ENCODE measurements at regions of chr12 and their contacts with region 1.

Region 1: GRCh38 chr12:51341259-51342007 is 5.0 kb downstream of the CELA1 start:
- DNase-seq: peak; percentile 83
- ATAC-seq: peak; percentile 91
- H3K4me3 Mint-ChIP-seq: no peak overlapping the region
- H3K27ac Mint-ChIP-seq: peak overlapping the region; percentile 48
- H3K4me1 Mint-ChIP-seq: peaks cover 7% of the 10 kb centered on the region
- H3K27me3 Mint-ChIP-seq: no peaks in the 10 kb centered on the region

Region 2: GRCh38 chr12:50763639-50764285 is 577.7 kb before region 1 on chr12 and contains the start of gene ATF1:
- CTCF ChIA-PET with region 1: interaction called, 10 read pairs
- DNase-seq: peak; percentile 93
- ATAC-seq: peak; percentile 84
- H3K4me3 Mint-ChIP-seq: peak within 1 kb of the TSS; percentile 85
- H3K27ac Mint-ChIP-seq: peak within 1 kb of the TSS; percentile 95
- H3K4me1 Mint-ChIP-seq: peaks cover 32% of the 10 kb centered on the region
- H3K27me3 Mint-ChIP-seq: no peaks in the 10 kb centered on the region
- total RNA-seq, gene ATF1: 29.4 to 44.0 TPM

Region 3: GRCh38 chr12:51246254-51246853 is 95.1 kb before region 1 on chr12:
- CTCF ChIA-PET with region 1: interaction called, 10 read pairs
- DNase-seq: peak; percentile 60
- ATAC-seq: peak; percentile 72
- H3K4me3 Mint-ChIP-seq: peak overlapping the region; percentile 11
- H3K27ac Mint-ChIP-seq: peak overlapping the region; percentile 85
- H3K4me1 Mint-ChIP-seq: peaks cover 42% of the 10 kb centered on the region
- H3K27me3 Mint-ChIP-seq: no peaks in the 10 kb centered on the region

Region 4: DNA sequence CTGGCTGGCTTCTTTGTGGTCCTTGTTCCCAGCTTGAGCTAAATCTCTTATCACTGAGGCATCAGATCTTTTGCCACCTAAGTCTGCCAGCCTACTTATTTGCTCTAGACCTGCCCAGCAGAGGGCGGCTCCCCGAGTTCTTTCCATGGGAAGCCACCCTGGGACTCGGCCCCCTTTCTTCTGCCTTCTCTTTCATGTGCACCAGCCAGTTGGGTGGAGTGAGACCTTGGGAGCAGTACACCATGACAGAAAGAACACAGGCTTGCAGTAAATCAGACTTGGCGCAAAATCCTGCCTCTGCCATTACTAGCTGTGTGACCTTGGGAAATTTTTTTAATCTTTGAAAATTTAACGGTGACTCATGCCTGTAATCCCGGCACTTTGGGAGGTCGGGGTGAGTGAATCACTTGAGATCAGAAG is 78.7 kb before region 1 on chr12:
- CTCF ChIA-PET with region 1: interaction called, 34 read pairs
- DNase-seq: peak; percentile 51
- ATAC-seq: peak; percentile 31
- H3K4me3 Mint-ChIP-seq: no peak overlapping the region
- H3K27ac Mint-ChIP-seq: no peak overlapping the region
- H3K4me1 Mint-ChIP-seq: peaks cover 14% of the 10 kb centered on the region
- H3K27me3 Mint-ChIP-seq: no peaks in the 10 kb centered on the region

Region 5: DNA sequence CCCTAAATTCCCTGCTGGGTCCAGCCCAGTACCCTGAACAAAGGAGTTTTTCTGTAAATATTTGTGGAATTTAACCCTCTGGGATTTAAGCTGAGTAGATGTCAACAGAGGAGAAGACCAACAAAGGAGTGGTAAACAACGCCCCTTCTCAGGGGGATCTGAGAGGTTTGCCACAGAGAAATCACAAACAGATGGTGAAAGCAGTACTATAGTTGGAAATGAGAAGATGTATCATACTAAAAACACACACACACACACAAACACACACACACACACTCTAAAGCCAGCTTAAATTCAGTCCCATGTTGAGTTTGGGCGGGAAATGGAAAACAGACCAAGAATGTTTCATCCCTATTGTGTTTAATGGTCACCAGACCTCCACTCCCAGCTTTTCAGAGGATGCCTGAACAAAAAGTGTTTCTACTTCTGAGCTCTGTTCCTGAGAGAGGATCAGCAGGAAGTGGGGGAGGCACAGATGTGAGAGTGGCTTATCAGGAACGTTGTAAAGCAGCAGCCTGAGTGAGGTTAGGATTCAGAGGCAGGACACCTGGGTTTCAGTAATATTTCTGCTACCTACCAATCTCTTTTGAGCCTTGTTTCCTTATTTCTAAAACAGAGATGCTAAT is 20.6 kb before region 1 on chr12:
- CTCF ChIA-PET with region 1: interaction called, 44 read pairs
- DNase-seq: no peak
- ATAC-seq: no peak
- H3K4me3 Mint-ChIP-seq: peak overlapping the region; percentile 95
- H3K27ac Mint-ChIP-seq: peak overlapping the region; percentile 91
- H3K4me1 Mint-ChIP-seq: peaks cover 67% of the 10 kb centered on the region
- H3K27me3 Mint-ChIP-seq: no peaks in the 10 kb centered on the region

Region 6: GRCh38 chr12:51351913-51352532 is 10.6 kb after region 1 on chr12:
- CTCF ChIA-PET with region 1: interaction called, 39 read pairs
- DNase-seq: peak; percentile 52
- ATAC-seq: peak; percentile 47
- H3K4me3 Mint-ChIP-seq: no peak overlapping the region
- H3K27ac Mint-ChIP-seq: no peak overlapping the region
- H3K4me1 Mint-ChIP-seq: no peaks in the 10 kb centered on the region
- H3K27me3 Mint-ChIP-seq: no peaks in the 10 kb centered on the region

Region 7: GRCh38 chr12:51405801-51406207 is 64.4 kb after region 1 on chr12:
- CTCF ChIA-PET with region 1: no interaction called
- DNase-seq: no peak
- ATAC-seq: no peak
- H3K4me3 Mint-ChIP-seq: no peak overlapping the region
- H3K27ac Mint-ChIP-seq: no peak overlapping the region
- H3K4me1 Mint-ChIP-seq: peaks cover 7% of the 10 kb centered on the region
- H3K27me3 Mint-ChIP-seq: no peaks in the 10 kb centered on the region

Region 8: DNA sequence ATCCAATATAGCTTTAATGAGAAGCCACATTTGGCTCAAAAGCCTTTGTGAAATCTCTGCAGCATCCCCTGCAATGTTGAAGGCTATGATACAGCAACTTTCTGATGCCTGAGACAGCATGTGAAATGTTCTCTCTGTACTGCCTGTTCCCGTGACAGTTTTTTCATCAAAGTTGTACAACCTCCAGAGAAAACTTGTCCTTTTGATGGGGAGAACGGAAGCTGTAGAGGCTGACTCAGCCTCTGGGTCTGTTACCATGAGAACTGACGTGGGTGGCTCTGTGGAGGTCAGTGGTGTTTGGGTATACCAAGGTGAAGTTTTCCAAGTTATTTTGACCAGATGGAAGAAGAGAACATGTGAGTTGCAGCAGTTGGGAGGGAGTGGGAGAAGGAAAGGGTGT is 100.2 kb after region 1 on chr12:
- CTCF ChIA-PET with region 1: no interaction called
- DNase-seq: no peak
- ATAC-seq: no peak
- H3K4me3 Mint-ChIP-seq: no peak overlapping the region
- H3K27ac Mint-ChIP-seq: no peak overlapping the region
- H3K4me1 Mint-ChIP-seq: peaks cover 20% of the 10 kb centered on the region
- H3K27me3 Mint-ChIP-seq: no peaks in the 10 kb centered on the region

Region 9: DNA sequence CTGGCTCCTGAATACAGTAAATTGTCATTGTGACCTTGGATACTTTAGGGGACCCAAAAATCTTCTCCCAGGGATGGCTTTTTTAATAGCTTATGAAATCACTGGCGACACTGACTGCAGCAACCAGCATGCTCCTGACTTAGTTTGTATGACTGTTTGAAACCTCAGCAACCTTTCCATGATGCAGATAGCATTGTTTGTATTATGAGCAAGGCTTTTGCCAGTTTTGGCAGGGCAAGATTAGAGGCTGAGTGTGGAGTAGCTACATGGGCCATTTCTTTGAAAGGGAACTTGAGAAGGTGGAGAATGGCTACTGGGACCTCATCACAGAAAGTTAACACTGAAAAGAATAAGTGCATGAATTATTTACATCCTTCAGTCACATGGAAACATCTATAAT is 134.1 kb after region 1 on chr12:
- CTCF ChIA-PET with region 1: no interaction called
- DNase-seq: no peak
- ATAC-seq: no peak
- H3K4me3 Mint-ChIP-seq: no peak overlapping the region
- H3K27ac Mint-ChIP-seq: no peak overlapping the region
- H3K4me1 Mint-ChIP-seq: peaks cover 23% of the 10 kb centered on the region
- H3K27me3 Mint-ChIP-seq: no peaks in the 10 kb centered on the region

Measured in activated CD8-positive, alpha-beta memory T cell treated with anti-CD3 and anti-CD28 coated beads, Interleukin-2, amount 10 ng/mL, durations not matched to agents 7 days and 5 days (primary cell).